Endothelial cell of umbilical vein (primary cell): ENCODE measurements at regions of chr7 and their contacts with region 1.

Region 1: GRCh38 chr7:32164346-32164957 is 94.2 kb upstream of the PDE1C start:
- DNase-seq: peak; percentile 70
- H3K4me3 ChIP-seq: no peak overlapping the region
- H3K27ac ChIP-seq: no peak overlapping the region
- H3K4me1 ChIP-seq: peaks cover 26% of the 10 kb centered on the region
- H3K27me3 ChIP-seq: no peaks in the 10 kb centered on the region
- CTCF ChIP-seq: peak; percentile 43 to 49
- POLR2A ChIP-seq: no peak

Region 2: DNA sequence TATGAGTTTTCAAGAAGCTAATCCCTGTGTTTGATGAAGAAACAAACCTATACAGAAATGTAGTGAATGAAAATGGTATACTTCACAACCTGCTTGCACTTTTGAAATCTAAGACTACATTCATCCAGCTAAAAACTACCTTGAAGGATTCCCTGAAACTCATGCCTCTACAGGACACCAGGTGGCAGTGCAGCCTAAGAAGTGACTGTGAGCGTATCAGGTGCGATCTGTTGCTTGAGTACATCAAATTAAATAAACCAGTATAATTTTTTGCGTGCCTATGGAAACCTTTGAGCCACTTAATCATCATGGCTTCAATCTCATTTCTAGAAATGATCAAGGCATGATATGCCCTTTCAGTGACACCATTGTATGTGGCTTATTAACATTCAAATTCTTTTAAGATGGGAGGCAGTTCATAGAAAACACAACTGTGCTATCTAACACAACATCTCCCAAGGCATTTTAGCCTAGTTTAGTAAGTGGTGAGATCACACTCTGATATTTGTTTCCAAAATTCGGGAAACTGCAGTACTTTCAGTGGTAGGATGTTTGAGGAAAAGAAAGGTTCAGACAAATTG is 420.1 kb before region 1 on chr7:
- CTCF ChIA-PET with region 1: interaction called, 113 read pairs
- POLR2A ChIA-PET with region 1: no interaction called
- dilution Hi-C with region 1: no loop called
- intact Hi-C with region 1: loop called (anchors 1 kb)
- DNase-seq: peak; percentile 79
- H3K4me3 ChIP-seq: no peak overlapping the region
- H3K27ac ChIP-seq: no peak overlapping the region
- H3K4me1 ChIP-seq: no peaks in the 10 kb centered on the region
- H3K27me3 ChIP-seq: peaks cover 3 to 5% of the 10 kb centered on the region in 2 experiments
- CTCF ChIP-seq: peak; percentile 63 to 71
- POLR2A ChIP-seq: no peak

Region 3: GRCh38 chr7:31788445-31788844 is 376.0 kb before region 1 on chr7:
- CTCF ChIA-PET with region 1: interaction called, 58 read pairs
- POLR2A ChIA-PET with region 1: no interaction called
- dilution Hi-C with region 1: no loop called
- intact Hi-C with region 1: no loop called
- DNase-seq: no peak
- H3K4me3 ChIP-seq: no peak overlapping the region
- H3K27ac ChIP-seq: no peak overlapping the region
- H3K4me1 ChIP-seq: no peaks in the 10 kb centered on the region
- H3K27me3 ChIP-seq: no peaks in the 10 kb centered on the region
- CTCF ChIP-seq: no peak
- POLR2A ChIP-seq: no peak

Region 4: DNA sequence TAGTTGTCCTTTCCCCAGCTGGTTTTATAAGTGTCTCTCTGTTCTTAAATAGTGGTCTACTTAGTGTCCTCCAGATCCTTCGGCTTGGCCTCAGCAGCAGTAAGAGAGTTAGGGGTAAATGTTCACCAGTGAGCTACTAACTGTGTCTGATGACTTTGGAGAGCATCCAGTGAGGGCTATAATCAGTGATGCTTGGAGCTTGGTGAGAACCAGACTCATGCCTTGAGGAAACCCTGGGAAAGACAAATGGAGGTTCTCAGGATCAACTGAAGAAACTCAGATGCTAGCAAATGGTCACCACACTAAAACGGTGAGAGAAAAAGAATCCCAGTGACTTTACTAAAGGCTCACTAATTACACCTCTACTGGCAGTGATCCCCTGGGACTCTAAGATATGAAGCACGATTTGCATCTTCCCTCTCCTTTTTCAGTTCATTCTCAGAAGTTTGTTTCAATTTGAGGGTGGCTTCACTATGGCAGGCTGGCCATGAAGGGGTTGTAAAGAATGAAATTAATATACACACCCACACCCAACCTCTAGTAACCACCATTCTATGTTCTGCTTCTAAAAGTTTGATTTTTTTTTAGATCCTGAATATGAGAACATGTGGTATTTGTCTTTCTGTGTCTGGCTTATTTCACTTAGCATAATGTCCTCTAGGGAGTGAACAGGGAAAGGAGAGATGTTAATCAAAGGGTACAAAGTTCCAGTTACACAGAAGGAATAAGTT is 272.2 kb before region 1 on chr7:
- CTCF ChIA-PET with region 1: no interaction called
- POLR2A ChIA-PET with region 1: no interaction called
- dilution Hi-C with region 1: no loop called
- intact Hi-C with region 1: loop called (anchors 5 kb)
- DNase-seq: no peak
- H3K4me3 ChIP-seq: no peak overlapping the region
- H3K27ac ChIP-seq: no peak overlapping the region
- H3K4me1 ChIP-seq: peaks cover 11% of the 10 kb centered on the region
- H3K27me3 ChIP-seq: no peaks in the 10 kb centered on the region
- CTCF ChIP-seq: no peak
- POLR2A ChIP-seq: no peak

Region 5: DNA sequence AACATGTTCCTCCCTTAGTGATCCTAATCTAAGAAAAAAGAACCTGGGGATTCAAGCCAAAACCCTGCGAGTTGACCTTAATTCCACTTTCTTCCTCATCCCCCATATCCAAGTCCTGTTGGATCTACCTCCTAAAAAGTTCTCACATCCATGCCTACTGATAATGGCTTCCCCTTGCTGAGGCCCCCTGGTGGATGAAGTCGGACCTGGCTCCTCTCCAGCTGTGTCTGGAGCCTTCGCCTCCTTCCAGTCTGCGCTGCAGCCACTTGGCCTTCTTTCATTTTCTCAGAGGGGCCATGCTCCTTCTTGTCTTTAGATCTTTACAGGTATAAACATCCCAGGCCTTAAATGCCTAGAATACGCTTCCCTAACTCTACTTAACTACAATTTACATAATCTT is 102.3 kb before region 1 on chr7:
- CTCF ChIA-PET with region 1: interaction called, 41 read pairs
- POLR2A ChIA-PET with region 1: no interaction called
- dilution Hi-C with region 1: no loop called
- intact Hi-C with region 1: loop called (anchors 1 kb)
- DNase-seq: peak; percentile 48
- H3K4me3 ChIP-seq: no peak overlapping the region
- H3K27ac ChIP-seq: no peak overlapping the region
- H3K4me1 ChIP-seq: no peaks in the 10 kb centered on the region
- H3K27me3 ChIP-seq: peaks cover 0 to 8% of the 10 kb centered on the region in 2 experiments
- CTCF ChIP-seq: peak; percentile 64 to 66
- POLR2A ChIP-seq: no peak

Region 6: DNA sequence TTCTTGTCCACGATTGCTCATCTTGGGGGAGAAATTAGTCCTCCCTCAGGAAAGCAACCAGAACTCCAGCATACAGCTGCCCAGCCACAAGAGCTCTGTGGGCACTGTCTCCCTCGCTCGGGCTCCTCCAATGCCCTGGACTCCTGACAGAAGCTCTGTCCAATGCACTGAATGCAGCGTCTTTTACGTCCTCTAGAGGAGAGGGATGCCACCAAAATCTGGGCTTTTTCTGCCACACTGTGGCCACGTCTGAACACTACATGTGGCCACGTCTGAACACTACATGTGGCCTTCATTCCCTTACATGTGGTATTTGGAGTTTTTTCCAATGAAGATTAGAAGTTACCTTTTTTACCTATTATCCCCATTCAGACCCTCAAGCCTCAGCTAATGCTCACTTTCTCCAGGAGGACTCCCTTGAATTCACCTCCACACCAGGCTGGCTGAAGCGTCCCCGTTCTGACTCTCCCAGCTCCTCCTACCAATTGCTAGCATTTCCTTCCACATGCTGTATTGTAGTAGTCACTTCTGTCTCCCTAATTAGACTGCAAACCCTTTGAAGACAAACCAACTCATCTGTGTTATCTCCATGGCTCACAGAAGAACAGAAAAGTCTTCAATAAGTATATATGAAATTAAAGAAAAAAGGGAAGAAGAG is 40.0 kb after region 1 on chr7:
- CTCF ChIA-PET with region 1: interaction called, 37 read pairs
- POLR2A ChIA-PET with region 1: no interaction called
- dilution Hi-C with region 1: no loop called
- intact Hi-C with region 1: loop called (anchors 1 kb)
- DNase-seq: peak; percentile 70
- H3K4me3 ChIP-seq: no peak overlapping the region
- H3K27ac ChIP-seq: no peak overlapping the region
- H3K4me1 ChIP-seq: no peaks in the 10 kb centered on the region
- H3K27me3 ChIP-seq: peaks cover 0 to 4% of the 10 kb centered on the region in 2 experiments
- CTCF ChIP-seq: peak; percentile 59 to 67
- POLR2A ChIP-seq: no peak

Region 7: DNA sequence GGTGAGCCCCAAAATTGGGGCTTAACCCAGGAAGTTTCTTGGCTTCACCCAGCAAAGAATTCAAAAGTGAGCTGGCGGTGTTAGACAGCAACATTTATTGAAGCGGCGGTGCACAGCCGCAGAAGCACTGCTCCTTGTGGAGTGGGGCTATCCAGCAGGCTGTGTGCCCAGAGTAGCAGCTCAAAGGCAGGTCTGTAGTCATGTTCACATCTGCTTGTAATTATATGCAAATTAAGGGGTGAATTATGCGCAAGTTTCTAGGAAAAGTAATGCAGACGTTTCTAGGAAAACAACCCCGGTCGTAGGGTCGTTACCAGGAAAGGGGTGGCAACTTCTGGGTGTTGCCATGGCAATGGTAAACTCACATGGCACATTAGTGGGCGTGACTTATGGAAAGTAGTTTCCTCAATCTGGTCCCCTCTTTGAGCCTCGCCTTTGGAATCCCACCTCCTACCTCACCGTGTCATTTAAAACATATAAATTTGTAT is 740.8 kb after region 1 on chr7:
- CTCF ChIA-PET with region 1: no interaction called
- POLR2A ChIA-PET with region 1: no interaction called
- dilution Hi-C with region 1: no loop called
- intact Hi-C with region 1: no loop called
- DNase-seq: peak; percentile 86
- H3K4me3 ChIP-seq: peak overlapping the region in 2 of 3 experiments; percentile 2 to 31
- H3K27ac ChIP-seq: peak overlapping the region; percentile 23
- H3K4me1 ChIP-seq: peaks cover 3% of the 10 kb centered on the region
- H3K27me3 ChIP-seq: no peaks in the 10 kb centered on the region
- CTCF ChIP-seq: no peak
- POLR2A ChIP-seq: no peak